GM12878 (cell line): ENCODE measurements at regions of chr16 and their contacts with region 1.

Region 1: DNA sequence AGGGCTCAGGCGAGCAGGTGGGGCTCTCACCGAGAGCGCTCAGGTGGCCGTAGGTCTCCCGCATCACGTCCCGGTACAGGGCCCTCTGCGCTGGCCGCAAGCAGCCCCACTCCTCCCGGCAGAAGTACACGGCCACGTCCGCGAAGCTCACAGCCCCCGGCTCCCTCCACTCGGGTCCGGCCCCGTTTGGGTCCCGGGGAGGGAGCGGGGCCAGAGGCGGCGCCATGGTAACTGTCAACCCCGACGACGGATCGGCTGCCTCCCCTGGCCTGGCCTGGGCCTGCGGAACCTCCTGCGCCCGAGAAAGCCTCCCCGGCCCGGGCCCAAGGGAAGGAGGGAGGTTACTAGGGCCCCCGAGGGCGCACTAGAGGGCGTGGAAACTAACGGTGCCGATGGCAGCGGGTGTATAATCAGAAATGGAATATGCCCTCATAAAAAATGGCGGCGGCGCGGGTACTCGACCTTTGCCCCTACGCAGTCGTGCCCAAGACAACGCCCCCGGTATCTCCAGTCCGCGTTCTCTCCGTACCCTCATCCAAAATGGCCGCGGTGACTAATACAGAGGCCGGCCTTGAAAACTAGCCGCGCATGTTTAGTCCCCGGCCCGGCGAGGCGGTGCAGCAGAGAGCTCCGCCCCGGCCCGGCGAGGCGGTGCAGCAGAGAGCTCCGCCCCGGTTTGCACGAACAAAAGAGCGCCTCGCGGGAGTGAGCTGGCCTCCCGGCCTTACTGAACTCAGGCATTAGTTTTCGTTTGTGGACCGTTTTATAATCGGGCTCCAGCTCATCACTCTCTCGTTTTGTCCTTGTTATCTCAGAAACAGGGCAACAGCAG is at the start of gene ZNF764:
- DNase-seq: peak; percentile 84
- ATAC-seq: peak; percentile 96
- H3K4me3 ChIP-seq: peak within 1 kb of the TSS; percentile 87
- H3K27ac ChIP-seq: peak within 1 kb of the TSS; percentile 85
- H3K4me1 ChIP-seq: no peaks in the 10 kb centered on the region
- H3K27me3 ChIP-seq: no peaks in the 10 kb centered on the region
- CTCF ChIP-seq: peak; percentile 1 to 9 (median 2); a peak in 1 of 6 replicates
- EP300 ChIP-seq: no peak
- POLR2A ChIP-seq: peak; percentile 68
- RAD21 ChIP-seq: no peak
- polyA plus RNA-seq, gene ZNF764: 0.61 to 1.6 TPM

Region 2: DNA sequence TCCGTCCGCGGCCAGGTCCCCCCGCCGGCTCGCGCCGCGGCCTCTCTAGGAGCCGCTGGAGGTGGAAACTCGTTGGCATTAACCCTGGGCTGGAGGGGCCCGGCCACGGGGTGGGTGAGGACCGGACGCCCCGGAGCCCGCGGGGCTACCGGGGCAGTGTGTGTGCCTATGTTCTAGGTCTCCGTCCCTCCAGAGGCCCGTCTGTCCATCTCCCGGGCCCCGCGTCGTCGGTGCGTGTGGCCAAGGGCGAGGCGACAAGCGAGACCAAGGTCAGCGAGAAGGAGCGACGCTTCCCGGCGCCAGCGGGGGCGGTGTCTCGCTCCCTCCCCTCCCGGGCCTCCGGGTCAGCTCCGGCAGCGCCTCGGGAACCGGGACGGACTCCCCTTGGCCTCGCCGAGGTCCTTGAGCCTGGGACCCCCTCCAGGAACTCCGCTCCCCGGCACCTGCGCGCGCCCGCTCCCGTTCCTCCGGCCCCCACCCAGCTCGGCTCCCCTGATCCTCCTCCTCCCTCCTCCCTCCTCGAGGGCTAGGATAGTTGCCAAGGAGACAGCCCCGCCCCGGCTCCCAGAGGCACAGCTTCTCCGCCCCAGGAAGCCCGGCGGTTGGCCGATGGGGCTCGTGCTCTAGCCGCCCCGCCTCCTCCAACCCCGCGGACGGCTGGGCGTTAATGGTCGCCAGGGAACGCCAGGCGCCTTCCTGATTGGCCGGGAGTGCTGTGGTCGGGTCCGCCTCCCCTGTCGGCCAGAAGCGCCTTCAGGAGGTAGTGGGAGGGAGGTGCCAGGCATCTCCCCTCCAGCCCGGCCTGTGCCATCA is 31.1 kb before region 1 on chr16:
- CTCF ChIA-PET with region 1: interaction called, 3 read pairs
- POLR2A ChIA-PET with region 1: interaction called, 7 read pairs
- RAD21 ChIA-PET with region 1: interaction called, 12 read pairs
- SMC1A ChIA-PET with region 1: interaction called, 4 read pairs
- in situ Hi-C with region 1: no loop called
- intact Hi-C with region 1: no loop called
- DNase-seq: peak; percentile 89
- ATAC-seq: peak; percentile 95
- H3K4me3 ChIP-seq: peak overlapping the region; percentile 91
- H3K27ac ChIP-seq: peak overlapping the region; percentile 93
- H3K4me1 ChIP-seq: peaks cover 15% of the 10 kb centered on the region
- H3K27me3 ChIP-seq: no peaks in the 10 kb centered on the region
- CTCF ChIP-seq: peak; percentile 19 to 42 (median 25); a peak in 4 of 6 replicates
- EP300 ChIP-seq: no peak
- POLR2A ChIP-seq: peak; percentile 42; the same call in 1 of the 2 replicates
- RAD21 ChIP-seq: no peak

Region 3: DNA sequence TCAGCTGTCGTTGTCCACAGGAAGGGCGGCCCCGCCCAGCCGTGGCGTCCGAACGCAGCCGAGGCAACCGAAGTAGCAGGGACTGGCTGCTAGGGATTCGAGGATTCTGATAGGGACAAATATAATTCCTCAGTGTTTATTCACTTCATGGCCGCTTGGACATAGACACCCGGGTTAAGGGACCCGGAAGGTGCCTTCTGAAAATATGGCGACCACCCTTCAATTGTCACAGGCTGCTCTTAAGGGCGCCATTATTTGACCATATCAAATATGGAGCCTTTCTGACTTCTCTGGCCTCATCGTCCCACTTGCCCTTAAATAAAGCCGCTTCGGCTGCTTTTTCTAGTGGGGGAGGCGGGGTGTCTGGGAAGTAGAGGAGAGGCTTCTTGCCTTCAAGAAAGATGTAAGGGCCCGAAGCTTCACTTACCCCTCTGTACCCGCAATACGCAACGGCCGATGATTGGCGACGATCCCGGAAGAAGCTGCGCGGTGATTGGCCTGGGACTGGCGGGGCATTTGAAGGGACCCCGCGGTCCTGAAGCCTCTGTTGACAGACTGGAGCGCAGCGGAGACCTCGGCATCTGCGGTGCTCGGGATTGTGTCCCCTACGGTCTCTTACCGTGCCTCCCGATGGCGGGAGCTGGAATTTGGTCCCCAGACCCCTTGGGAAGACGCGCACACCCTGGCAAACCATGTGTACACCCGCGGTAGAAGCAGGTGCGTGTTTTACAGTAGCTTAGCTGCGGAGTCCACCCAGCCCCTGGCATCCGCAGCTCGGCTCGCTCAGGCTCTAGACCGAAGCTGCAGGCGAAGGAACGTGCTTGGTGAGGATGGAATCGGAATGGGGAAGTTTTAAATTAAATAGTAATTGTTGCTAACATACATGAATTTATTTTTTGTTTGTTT is 13.8 kb after region 1 on chr16 and contains the start of gene ZNF688:
- CTCF ChIA-PET with region 1: interaction called, 11 read pairs
- POLR2A ChIA-PET with region 1: interaction called, 31 read pairs
- RAD21 ChIA-PET with region 1: interaction called, 28 read pairs
- SMC1A ChIA-PET with region 1: interaction called, 12 read pairs
- in situ Hi-C with region 1: no loop called
- intact Hi-C with region 1: no loop called
- DNase-seq: peak; percentile 95
- ATAC-seq: peak; percentile 89
- H3K4me3 ChIP-seq: peak within 1 kb of the TSS; percentile 81
- H3K27ac ChIP-seq: peak within 1 kb of the TSS; percentile 93
- H3K4me1 ChIP-seq: peaks cover 26% of the 10 kb centered on the region
- H3K27me3 ChIP-seq: no peaks in the 10 kb centered on the region
- CTCF ChIP-seq: no peak
- EP300 ChIP-seq: no peak
- POLR2A ChIP-seq: peak; percentile 65
- RAD21 ChIP-seq: no peak
- polyA plus RNA-seq, gene ZNF688: 0.14 to 0.88 TPM

Region 4: GRCh38 chr16:30874821-30875717 is 316.9 kb after region 1 on chr16:
- CTCF ChIA-PET with region 1: no interaction called
- POLR2A ChIA-PET with region 1: no interaction called
- RAD21 ChIA-PET with region 1: no interaction called
- SMC1A ChIA-PET with region 1: no interaction called
- in situ Hi-C with region 1: no loop called
- intact Hi-C with region 1: no loop called
- DNase-seq: peak; percentile 64
- ATAC-seq: peak; percentile 87
- H3K4me3 ChIP-seq: peak overlapping the region; percentile 76
- H3K27ac ChIP-seq: peak overlapping the region; percentile 93
- H3K4me1 ChIP-seq: peaks cover 22% of the 10 kb centered on the region
- H3K27me3 ChIP-seq: no peaks in the 10 kb centered on the region
- CTCF ChIP-seq: no peak
- EP300 ChIP-seq: no peak
- POLR2A ChIP-seq: peak; percentile 99
- RAD21 ChIP-seq: no peak